ENCODE measurements at regions of chr19 and their contacts with region 1.

Region 1: DNA sequence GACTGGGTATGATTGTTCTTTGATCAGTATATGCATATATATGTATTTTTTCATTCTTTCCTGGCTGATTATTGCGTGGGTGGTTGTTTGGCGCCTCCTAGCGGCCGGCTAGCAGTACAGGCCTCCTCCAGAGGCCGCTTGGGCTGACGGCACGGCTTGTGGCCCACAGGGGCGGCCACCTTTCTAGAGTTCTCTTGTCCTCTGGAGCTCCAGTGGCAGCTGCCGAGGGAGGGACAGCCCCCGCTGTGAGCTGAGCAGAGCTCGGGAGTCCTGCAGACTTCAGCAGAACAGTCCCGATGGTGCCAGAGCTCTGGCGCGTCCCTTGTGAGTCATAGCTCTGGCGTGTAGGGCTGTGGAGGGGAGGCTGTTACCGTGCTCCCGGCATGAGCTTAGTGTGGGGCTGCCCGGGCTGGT is 22.5 kb upstream of the ZNF429 start:
- DNase-seq: peak; percentile 78
- ATAC-seq: peak; percentile 91

Region 2: DNA sequence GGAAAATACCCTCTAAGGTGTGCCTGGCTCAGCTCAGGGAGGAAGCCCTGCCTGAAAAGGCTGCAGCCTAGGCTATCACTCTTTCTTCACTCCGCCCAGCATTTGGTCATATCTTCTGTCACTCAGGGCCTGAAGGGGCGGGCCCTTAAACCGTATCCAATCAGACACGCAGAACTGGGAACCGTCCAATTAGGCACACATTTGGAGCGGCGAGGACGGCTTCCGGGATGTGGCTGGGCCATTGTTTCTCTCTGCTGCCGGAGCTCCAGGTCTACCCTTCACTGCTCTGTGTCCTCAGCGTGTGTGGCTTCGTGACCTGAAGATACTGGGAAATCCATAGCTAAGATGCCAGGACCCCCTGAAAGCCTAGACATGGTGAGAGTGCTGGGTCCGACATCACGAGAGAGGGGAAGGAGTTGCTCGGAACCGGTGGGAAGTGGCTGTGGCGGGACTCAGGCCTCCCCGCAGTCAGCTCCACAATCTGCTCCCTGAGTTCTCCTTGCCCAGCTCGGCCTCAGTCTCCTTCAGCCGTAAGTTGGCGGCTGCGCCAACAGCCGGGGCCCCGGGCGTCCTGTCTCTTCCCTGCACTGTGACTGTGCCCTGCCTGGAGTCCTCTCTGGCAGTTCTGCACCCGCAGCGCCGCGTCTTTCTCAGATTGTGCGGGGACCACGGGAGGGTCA is 85.8 kb before region 1 on chr19 and contains the start of gene ZNF493:
- intact Hi-C with region 1: no loop called
- DNase-seq: peak; percentile 94
- ATAC-seq: peak; percentile 100
- total RNA-seq, gene ZNF493: 11.2 TPM

Region 3: DNA sequence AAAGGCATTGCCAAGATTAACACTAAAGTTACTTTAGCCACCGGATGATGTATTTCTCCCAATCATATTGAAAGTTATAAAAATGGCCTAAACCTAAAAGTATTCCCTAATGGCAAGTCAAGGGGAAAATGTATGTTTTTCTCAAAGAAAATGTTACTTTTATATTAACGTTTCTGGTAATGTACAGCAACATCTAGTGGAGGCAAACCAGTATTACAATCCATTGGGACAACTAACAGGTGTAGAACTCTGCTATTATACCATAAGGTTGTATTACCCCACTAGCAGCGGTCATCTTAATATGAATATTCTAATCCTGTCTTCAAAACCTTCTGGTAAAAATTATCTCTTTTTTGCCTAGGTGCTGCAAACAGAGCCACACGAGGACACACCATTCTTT is 215.3 kb after region 1 on chr19:
- intact Hi-C with region 1: loop called (anchors 10 kb)
- DNase-seq: no peak
- ATAC-seq: peak; percentile 61

Measured in left ventricle myocardium superior (tissue), 1 donor.